GM12878 (cell line): ENCODE measurements at regions of chr15 and their contacts with region 1.

Region 1: GRCh38 chr15:73240866-73241499 is 127.8 kb downstream of the HCN4 start:
- DNase-seq: peak; percentile 28
- ATAC-seq: peak; percentile 83
- H3K4me3 ChIP-seq: no peak overlapping the region
- H3K27ac ChIP-seq: no peak overlapping the region
- H3K4me1 ChIP-seq: no peaks in the 10 kb centered on the region
- H3K27me3 ChIP-seq: no peaks in the 10 kb centered on the region; a peak in 1 of 4 replicates
- CTCF ChIP-seq: peak; percentile 67 to 85 (median 80)
- EP300 ChIP-seq: no peak
- POLR2A ChIP-seq: no peak
- RAD21 ChIP-seq: peak; percentile 89

Region 2: DNA sequence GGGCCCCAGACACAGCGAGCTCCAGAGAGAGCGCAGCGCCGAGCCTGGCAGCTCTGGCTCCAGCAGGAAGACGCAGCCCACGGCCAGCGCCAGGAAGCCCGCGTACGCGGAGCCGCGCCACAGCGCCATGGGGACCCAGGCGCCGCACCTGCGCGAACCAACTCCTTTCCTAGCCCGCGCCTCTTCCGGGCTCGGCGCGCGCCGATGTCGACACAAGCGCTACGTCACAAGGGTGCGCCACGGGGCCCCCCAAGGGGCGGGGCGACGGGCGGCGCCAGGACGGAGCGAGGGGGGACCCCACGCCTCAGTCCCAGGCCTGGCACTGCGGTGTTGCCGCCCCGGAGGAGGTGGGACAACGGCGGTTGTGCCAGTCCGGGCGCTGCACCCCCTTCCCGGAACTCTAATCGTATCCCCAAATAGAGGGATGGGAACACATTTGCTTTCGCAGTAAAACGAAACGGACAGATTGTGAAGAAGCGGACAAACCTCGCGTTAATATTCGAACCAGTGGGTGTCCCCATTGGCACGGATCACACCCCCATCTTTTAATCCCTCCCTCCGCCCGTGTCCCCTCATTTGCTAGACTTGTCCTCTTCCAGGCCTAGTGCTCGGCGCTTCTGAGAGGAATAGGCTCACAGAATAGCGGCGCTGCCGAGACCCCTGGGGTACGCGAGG is 457.3 kb before region 1 on chr15 and contains the start of gene ADPGK:
- CTCF ChIA-PET with region 1: no interaction called
- POLR2A ChIA-PET with region 1: no interaction called
- RAD21 ChIA-PET with region 1: no interaction called
- SMC1A ChIA-PET with region 1: interaction called, 3 read pairs
- in situ Hi-C with region 1: no loop called
- intact Hi-C with region 1: loop called (anchors 10 kb)
- DNase-seq: peak; percentile 70
- ATAC-seq: peak; percentile 86
- H3K4me3 ChIP-seq: peak within 1 kb of the TSS; percentile 94
- H3K27ac ChIP-seq: peak within 1 kb of the TSS; percentile 93
- H3K4me1 ChIP-seq: peaks cover 31% of the 10 kb centered on the region
- H3K27me3 ChIP-seq: no peaks in the 10 kb centered on the region
- CTCF ChIP-seq: 0 out of 6 replicates have a peak, but pooled peaks of 1 of the 3 experiments have one; percentile 0
- EP300 ChIP-seq: peak in 1 of 2 experiments; percentile 34; a peak in 1 of 4 replicates
- POLR2A ChIP-seq: peak; percentile 98
- RAD21 ChIP-seq: no peak
- polyA plus RNA-seq, gene ADPGK: 13.8 to 18.1 TPM

Region 3: DNA sequence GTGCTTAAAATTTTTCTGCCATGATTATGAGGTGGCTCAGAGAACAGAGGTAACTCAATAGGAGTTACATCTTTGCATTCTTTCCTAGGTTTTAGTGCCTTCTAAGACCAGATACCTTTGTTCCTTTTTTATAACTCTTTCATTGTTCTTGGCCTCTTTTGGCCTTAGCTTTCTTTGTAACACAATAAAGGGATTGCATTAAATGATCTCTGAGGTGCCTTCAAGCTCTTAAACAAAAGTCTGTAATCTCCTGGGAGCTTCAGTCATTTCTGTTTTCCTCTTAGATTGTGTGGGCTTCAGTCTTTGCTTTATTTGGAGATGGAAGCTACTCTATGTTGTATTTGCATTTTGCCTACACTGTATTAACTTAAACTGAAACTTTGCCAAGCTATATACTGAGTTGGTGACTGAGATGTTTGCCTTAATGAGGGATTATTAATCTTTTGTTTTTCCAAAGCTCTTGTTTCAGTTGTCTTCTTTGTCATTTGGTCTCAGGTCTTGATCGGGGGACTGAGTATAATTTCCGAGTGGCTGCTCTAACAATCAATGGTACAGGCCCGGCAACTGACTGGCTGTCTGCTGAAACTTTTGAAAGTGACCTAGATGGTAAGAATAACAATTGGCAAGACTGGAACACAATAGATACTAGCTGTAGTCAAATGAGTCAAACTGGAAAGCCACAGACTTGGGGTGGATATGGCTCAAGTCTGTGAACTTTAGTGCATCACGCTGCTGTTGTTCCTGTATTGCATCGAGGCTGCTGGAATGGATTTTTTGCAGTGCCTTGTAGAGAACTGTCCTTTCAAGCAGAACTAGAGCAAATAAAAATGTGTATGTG is 17.5 kb after region 1 on chr15:
- CTCF ChIA-PET with region 1: interaction called, 73 read pairs
- POLR2A ChIA-PET with region 1: no interaction called
- RAD21 ChIA-PET with region 1: interaction called, 4 read pairs
- SMC1A ChIA-PET with region 1: interaction called, 16 read pairs
- in situ Hi-C with region 1: no loop called
- intact Hi-C with region 1: no loop called
- DNase-seq: peak; percentile 26
- ATAC-seq: peak; percentile 94
- H3K4me3 ChIP-seq: no peak overlapping the region
- H3K27ac ChIP-seq: no peak overlapping the region
- H3K4me1 ChIP-seq: no peaks in the 10 kb centered on the region
- H3K27me3 ChIP-seq: no peaks in the 10 kb centered on the region
- CTCF ChIP-seq: no peak
- EP300 ChIP-seq: no peak
- POLR2A ChIP-seq: no peak
- RAD21 ChIP-seq: no peak

Region 4: GRCh38 chr15:73273181-73274002 is 32.4 kb after region 1 on chr15:
- CTCF ChIA-PET with region 1: interaction called, 78 read pairs
- POLR2A ChIA-PET with region 1: no interaction called
- RAD21 ChIA-PET with region 1: interaction called, 29 read pairs
- SMC1A ChIA-PET with region 1: interaction called, 27 read pairs
- in situ Hi-C with region 1: no loop called
- intact Hi-C with region 1: loop called (anchors 1 kb)
- DNase-seq: no peak
- ATAC-seq: peak; percentile 96
- H3K4me3 ChIP-seq: no peak overlapping the region
- H3K27ac ChIP-seq: no peak overlapping the region
- H3K4me1 ChIP-seq: no peaks in the 10 kb centered on the region
- H3K27me3 ChIP-seq: no peaks in the 10 kb centered on the region
- CTCF ChIP-seq: peak; percentile 60 to 79 (median 66)
- EP300 ChIP-seq: no peak
- POLR2A ChIP-seq: no peak
- RAD21 ChIP-seq: peak; percentile 63